ENCODE measurements at regions of chr17 and their contacts with region 1.

Region 1: GRCh38 chr17:9905902-9906301 is 831 bp upstream of the RCVRN start:
- DNase-seq: peak; percentile 55
- ATAC-seq: peak; percentile 70
- H3K4me3 Mint-ChIP-seq: no peak overlapping the region
- H3K27ac Mint-ChIP-seq: no peak overlapping the region
- H3K4me1 Mint-ChIP-seq: no peaks in the 10 kb centered on the region
- H3K27me3 Mint-ChIP-seq: peaks cover 6% of the 10 kb centered on the region
- CTCF ChIP-seq: peak; percentile 65

Region 2: DNA sequence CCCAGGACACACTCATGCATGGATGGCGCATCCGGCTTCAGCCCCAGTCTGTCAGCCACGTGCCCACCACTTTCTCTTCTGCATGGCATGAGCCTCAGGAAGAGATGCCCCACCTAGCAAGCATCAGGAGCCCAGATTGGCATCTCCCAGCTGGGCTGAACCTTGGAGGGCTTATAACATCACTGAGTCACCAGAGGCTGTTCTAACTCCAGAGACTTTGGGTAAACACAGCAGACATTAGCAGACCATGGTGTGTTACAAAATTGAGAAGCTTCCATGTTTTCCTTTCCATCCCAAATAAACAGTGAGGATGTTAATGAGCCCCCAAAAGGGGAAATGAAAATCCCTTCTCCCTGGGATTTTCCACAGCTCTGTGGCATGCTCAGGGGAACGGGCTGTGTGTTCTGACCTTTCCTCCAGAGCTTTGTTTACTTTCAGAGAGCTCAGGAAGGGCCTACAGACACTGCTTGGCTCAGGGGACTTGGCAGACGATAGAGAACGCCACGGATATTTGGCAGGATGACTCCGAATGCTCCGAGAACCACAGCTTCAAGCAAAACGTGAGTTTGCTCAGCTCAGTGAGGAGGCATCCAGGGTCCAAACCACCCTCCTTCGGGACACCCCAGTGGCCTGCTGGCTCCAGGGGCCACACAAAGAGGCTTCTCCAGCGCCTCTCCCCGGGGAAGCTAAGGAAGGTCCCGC is 63.7 kb before region 1 on chr17:
- CTCF ChIA-PET with region 1: no interaction called
- POLR2A ChIA-PET with region 1: no interaction called
- intact Hi-C with region 1: loop called (anchors 10 kb)
- DNase-seq: no peak
- ATAC-seq: no peak
- H3K4me3 Mint-ChIP-seq: no peak overlapping the region
- H3K27ac Mint-ChIP-seq: no peak overlapping the region
- H3K4me1 Mint-ChIP-seq: no peaks in the 10 kb centered on the region
- H3K27me3 Mint-ChIP-seq: peaks cover 6% of the 10 kb centered on the region
- CTCF ChIP-seq: no peak

Measured in activated CD8-positive, alpha-beta T cell treated with anti-CD3 and anti-CD28 coated beads for 36 hours (primary cell).